B cell (primary cell): ENCODE measurements at regions of chr1 and their contacts with region 1.

Region 1: DNA sequence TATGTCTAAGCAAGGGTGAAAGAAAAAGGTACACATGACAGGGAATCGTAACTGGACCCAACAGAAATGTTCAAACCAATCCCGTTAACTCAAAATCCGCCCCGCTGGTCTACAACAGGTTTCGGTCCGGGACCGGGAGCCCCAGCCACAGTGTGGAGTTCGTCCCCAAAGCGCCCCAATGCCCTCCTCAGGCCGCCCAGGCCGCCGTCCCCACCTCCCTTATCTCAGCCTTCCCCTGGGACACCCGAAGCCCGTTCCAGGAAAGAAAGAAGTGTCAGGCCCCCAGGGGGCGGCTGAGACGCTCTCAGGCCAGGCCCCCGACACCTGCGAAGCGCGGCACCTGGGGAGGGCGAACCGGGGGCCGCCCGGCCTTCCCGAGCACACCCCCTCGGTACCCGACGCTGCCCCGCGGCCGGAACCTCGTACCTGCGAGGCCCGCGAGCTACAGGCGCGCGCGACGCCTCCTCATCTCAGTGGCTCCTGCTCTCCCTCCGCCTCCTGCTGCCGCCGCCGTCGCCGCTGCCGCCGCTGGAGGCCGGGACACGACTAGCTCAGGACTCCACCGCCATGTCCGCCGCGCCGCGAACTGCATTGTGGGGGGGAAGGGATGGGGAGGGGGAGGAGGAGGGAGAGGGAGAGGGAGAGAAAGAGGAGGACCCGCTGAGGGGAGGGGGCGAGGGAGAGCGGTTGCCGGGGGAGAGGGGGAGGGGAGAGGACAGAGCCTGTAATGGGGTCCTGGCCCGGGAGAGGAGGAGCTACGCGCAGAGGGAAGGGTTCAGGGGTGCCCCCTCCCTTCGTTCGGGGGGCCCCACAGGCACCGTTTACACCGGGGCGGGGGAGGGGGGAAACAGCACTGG is at the start of gene TUT4:
- DNase-seq: peak; percentile 86
- ATAC-seq: peak; percentile 53
- H3K4me3 ChIP-seq: peak within 1 kb of the TSS; percentile 85 to 95 (median 92)
- H3K4me3 Mint-ChIP-seq: no peak within 1 kb of the TSS
- H3K27ac ChIP-seq: peak within 1 kb of the TSS; percentile 94
- H3K27ac Mint-ChIP-seq: peak within 1 kb of the TSS; percentile 68
- H3K4me1 ChIP-seq: peaks cover 25 to 31% of the 10 kb centered on the region in 2 donors
- H3K4me1 Mint-ChIP-seq: peaks cover 37% of the 10 kb centered on the region
- H3K27me3 ChIP-seq: no peaks in the 10 kb centered on the region
- H3K27me3 Mint-ChIP-seq: no peaks in the 10 kb centered on the region
- CTCF ChIP-seq: no peak
- total RNA-seq, gene TUT4: 248 and 265 TPM in 2 replicates

Region 2: DNA sequence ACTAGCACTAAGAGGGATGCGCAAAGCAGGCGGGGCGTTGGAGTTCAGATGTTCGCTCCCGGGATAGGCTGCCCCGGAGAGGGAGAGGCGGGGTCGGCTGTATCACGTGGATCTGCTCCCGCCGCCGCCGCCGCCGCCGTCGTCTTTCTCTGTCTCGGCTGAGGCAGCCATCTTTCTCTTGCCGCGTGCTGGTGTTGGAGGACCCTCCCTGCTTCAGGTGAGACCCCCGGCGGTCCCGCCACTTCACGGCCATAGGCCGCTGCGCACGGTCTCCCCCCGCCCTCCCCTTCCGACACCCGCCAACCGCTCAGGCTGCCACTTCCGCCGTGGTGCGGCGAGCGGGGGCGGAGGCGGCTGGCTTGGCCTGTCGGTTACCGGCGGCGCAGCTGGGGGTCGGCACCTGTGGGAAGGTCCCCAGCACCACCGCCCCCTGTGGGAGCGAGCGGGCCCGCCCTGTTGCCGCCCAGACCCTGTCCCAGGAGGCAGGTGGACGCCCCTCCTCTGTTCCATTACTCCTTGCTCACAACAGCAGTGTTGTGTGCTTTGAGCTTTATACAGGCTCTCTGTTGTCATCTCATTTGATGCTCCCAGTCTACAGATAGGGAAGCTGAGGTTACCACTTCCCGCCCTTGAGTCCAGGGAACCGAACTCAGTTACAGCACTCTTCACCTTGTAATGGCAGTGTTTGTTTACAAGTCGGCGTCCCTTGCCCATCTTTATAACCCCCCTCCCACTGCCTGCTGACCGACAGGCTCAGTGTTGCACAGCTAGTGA is 496.4 kb before region 1 on chr1 and contains the start of gene BTF3L4:
- CTCF ChIA-PET with region 1: no interaction called
- POLR2A ChIA-PET with region 1: interaction called, 5 read pairs
- intact Hi-C with region 1: loop called (anchors 5 kb)
- DNase-seq: peak; percentile 93
- ATAC-seq: peak; percentile 89
- H3K4me3 ChIP-seq: peak within 1 kb of the TSS; percentile 73 to 99 (median 95)
- H3K4me3 Mint-ChIP-seq: peak within 1 kb of the TSS; percentile 98
- H3K27ac ChIP-seq: peak within 1 kb of the TSS; percentile 85 to 92
- H3K27ac Mint-ChIP-seq: peak within 1 kb of the TSS; percentile 97
- H3K4me1 ChIP-seq: peaks cover 25 to 31% of the 10 kb centered on the region in 2 donors
- H3K4me1 Mint-ChIP-seq: peaks cover 53% of the 10 kb centered on the region
- H3K27me3 ChIP-seq: no peaks in the 10 kb centered on the region
- H3K27me3 Mint-ChIP-seq: no peaks in the 10 kb centered on the region
- CTCF ChIP-seq: peak; percentile 17
- total RNA-seq, gene BTF3L4: 32.7 and 33.8 TPM in 2 replicates

Region 3: GRCh38 chr1:52518962-52519361 is 33.8 kb before region 1 on chr1:
- CTCF ChIA-PET with region 1: no interaction called
- POLR2A ChIA-PET with region 1: interaction called, 5 read pairs
- intact Hi-C with region 1: loop called (anchors 5 kb)
- DNase-seq: no peak
- ATAC-seq: no peak
- H3K4me3 ChIP-seq: no peak overlapping the region
- H3K4me3 Mint-ChIP-seq: no peak overlapping the region
- H3K27ac ChIP-seq: no peak overlapping the region
- H3K27ac Mint-ChIP-seq: no peak overlapping the region
- H3K4me1 ChIP-seq: peaks cover 6 to 7% of the 10 kb centered on the region in 2 donors
- H3K4me1 Mint-ChIP-seq: peaks cover 17% of the 10 kb centered on the region
- H3K27me3 ChIP-seq: no peaks in the 10 kb centered on the region
- H3K27me3 Mint-ChIP-seq: no peaks in the 10 kb centered on the region
- CTCF ChIP-seq: no peak

Region 4: DNA sequence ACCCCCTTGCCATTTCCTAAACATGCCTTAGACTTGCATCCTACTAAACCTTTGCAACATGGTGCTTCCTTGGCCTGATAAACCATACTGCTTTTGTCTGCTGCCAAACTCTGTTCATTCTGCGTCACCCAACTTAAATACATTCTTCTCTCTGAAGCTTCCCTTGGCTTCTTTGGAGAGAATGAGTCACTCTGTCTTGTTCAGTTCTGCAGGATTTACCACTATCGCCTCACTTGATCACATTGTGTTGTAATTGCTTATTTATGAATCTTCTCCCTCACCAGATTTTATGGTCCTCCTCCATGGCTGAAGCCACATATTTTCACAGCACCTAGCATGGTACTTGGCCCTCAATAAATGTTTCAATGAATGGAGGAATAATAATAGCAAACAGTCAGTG is 21.9 kb after region 1 on chr1:
- CTCF ChIA-PET with region 1: no interaction called
- POLR2A ChIA-PET with region 1: interaction called, 11 read pairs
- intact Hi-C with region 1: loop called (anchors 2 kb)
- DNase-seq: no peak
- ATAC-seq: no peak
- H3K4me3 ChIP-seq: no peak overlapping the region
- H3K4me3 Mint-ChIP-seq: no peak overlapping the region
- H3K27ac ChIP-seq: no peak overlapping the region
- H3K27ac Mint-ChIP-seq: no peak overlapping the region
- H3K4me1 ChIP-seq: peaks cover 5 to 7% of the 10 kb centered on the region in 2 donors
- H3K4me1 Mint-ChIP-seq: peaks cover 8% of the 10 kb centered on the region
- H3K27me3 ChIP-seq: no peaks in the 10 kb centered on the region
- H3K27me3 Mint-ChIP-seq: no peaks in the 10 kb centered on the region
- CTCF ChIP-seq: no peak

Region 5: GRCh38 chr1:52636721-52637695 is 84.3 kb after region 1 on chr1:
- CTCF ChIA-PET with region 1: interaction called, 18 read pairs
- POLR2A ChIA-PET with region 1: interaction called, 82 read pairs
- intact Hi-C with region 1: loop called (anchors 1 kb)
- DNase-seq: peak; percentile 95
- ATAC-seq: peak; percentile 69
- H3K4me3 ChIP-seq: peak overlapping the region; percentile 25 to 50 (median 39)
- H3K4me3 Mint-ChIP-seq: peak overlapping the region; percentile 91
- H3K27ac ChIP-seq: peak overlapping the region; percentile 86 to 99
- H3K27ac Mint-ChIP-seq: peak overlapping the region; percentile 100
- H3K4me1 ChIP-seq: peaks cover 85 to 92% of the 10 kb centered on the region in 2 donors
- H3K4me1 Mint-ChIP-seq: peaks cover 79% of the 10 kb centered on the region
- H3K27me3 ChIP-seq: no peaks in the 10 kb centered on the region
- H3K27me3 Mint-ChIP-seq: no peaks in the 10 kb centered on the region
- CTCF ChIP-seq: no peak

Region 6: GRCh38 chr1:52665006-52665941 is 112.5 kb after region 1 on chr1:
- CTCF ChIA-PET with region 1: interaction called, 6 read pairs
- POLR2A ChIA-PET with region 1: interaction called, 12 read pairs
- intact Hi-C with region 1: no loop called
- DNase-seq: no peak
- ATAC-seq: no peak
- H3K4me3 ChIP-seq: no peak overlapping the region
- H3K4me3 Mint-ChIP-seq: no peak overlapping the region
- H3K27ac ChIP-seq: peak overlapping the region in 1 of 2 donors; percentile 28
- H3K27ac Mint-ChIP-seq: peak overlapping the region; percentile 74
- H3K4me1 ChIP-seq: peaks cover 4 to 8% of the 10 kb centered on the region in 2 donors
- H3K4me1 Mint-ChIP-seq: peaks cover 21% of the 10 kb centered on the region
- H3K27me3 ChIP-seq: no peaks in the 10 kb centered on the region
- H3K27me3 Mint-ChIP-seq: no peaks in the 10 kb centered on the region
- CTCF ChIP-seq: no peak